BJ (cell line): ENCODE measurements at regions of chr13 and their contacts with region 1.

Region 1: DNA sequence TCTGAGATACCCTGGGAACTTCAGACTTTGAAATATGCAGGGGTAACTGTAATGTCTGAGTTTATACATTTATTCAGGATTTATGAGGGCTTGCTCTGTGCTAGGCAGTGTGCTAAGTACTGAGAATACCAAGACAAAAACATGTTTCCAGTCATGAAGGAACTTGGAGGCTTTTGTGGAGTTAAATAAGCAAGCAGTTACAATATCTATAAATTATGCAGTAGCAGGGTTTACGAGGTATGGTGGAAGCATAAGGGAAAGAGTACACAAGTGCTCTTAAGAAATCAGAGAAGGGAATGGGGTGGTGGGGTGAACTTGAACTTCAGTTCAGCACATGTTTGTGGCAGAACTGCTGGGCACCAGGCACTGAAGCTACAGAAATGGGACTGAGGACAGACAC is 28.0 kb downstream of the MAB21L1 start:
- DNase-seq: no peak
- H3K4me3 ChIP-seq: no peak overlapping the region
- H3K27me3 ChIP-seq: no peaks in the 10 kb centered on the region
- CTCF ChIP-seq: no peak

Region 2: DNA sequence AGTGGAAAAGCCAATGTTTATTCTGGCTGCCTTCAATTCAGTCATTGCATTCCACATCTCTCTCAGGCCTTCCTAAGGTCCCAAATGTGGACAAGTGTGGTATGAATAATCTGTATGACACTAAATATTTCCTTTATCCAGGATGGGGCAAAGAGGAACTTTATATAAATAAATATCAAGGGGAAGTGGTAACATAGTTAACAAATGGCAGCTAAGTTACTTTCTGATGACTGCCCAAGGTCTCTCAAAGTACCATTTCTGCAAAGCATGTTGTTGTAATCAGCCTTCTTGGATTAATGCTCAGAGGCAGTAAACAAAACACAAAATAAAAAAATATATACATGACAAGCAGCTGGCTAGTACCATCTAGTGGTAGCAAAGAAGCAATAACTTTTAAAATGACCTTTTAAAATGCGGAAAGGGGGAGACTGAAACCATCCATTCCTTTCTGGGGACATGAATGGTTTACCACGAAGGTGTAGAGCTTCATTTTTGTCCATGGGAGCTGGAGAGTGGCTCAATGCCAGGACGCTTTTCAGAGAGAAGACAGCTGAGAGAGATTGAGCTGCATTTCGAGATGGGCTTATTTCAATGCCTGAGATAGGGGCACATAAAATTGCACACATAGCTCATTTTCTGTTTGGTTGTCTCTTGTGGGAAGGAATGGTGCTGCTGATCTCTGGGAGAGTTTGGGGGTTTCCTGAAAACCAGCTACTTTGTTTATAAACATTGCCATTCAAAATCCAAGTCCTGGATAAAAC is 1371.3 kb before region 1 on chr13:
- CTCF ChIA-PET with region 1: no interaction called
- POLR2A ChIA-PET with region 1: no interaction called
- DNase-seq: peak; percentile 55
- H3K4me3 ChIP-seq: no peak overlapping the region
- H3K27me3 ChIP-seq: no peaks in the 10 kb centered on the region
- CTCF ChIP-seq: peak; percentile 58

Region 3: GRCh38 chr13:35378939-35379338 is 69.5 kb before region 1 on chr13:
- CTCF ChIA-PET with region 1: no interaction called
- POLR2A ChIA-PET with region 1: no interaction called
- DNase-seq: no peak
- H3K4me3 ChIP-seq: no peak overlapping the region
- H3K27me3 ChIP-seq: no peaks in the 10 kb centered on the region
- CTCF ChIP-seq: no peak

Region 4: GRCh38 chr13:35475960-35476943 is 27.8 kb after region 1 on chr13 and contains the start of gene MAB21L1:
- CTCF ChIA-PET with region 1: no interaction called
- POLR2A ChIA-PET with region 1: interaction called, 21 read pairs
- DNase-seq: peak; percentile 83
- H3K4me3 ChIP-seq: peak within 1 kb of the TSS; percentile 94
- H3K27me3 ChIP-seq: no peaks in the 10 kb centered on the region
- CTCF ChIP-seq: no peak
- polyA plus RNA-seq, gene MAB21L1: 65.6 and 67.9 TPM in 2 replicates

Region 5: GRCh38 chr13:35594096-35594495 is 145.6 kb after region 1 on chr13:
- CTCF ChIA-PET with region 1: no interaction called
- POLR2A ChIA-PET with region 1: no interaction called
- DNase-seq: no peak
- H3K4me3 ChIP-seq: no peak overlapping the region
- H3K27me3 ChIP-seq: no peaks in the 10 kb centered on the region
- CTCF ChIP-seq: no peak